Naive thymus-derived CD4-positive, alpha-beta T cell (primary cell): ENCODE measurements at regions of chr4 and their contacts with region 1.

Region 1: DNA sequence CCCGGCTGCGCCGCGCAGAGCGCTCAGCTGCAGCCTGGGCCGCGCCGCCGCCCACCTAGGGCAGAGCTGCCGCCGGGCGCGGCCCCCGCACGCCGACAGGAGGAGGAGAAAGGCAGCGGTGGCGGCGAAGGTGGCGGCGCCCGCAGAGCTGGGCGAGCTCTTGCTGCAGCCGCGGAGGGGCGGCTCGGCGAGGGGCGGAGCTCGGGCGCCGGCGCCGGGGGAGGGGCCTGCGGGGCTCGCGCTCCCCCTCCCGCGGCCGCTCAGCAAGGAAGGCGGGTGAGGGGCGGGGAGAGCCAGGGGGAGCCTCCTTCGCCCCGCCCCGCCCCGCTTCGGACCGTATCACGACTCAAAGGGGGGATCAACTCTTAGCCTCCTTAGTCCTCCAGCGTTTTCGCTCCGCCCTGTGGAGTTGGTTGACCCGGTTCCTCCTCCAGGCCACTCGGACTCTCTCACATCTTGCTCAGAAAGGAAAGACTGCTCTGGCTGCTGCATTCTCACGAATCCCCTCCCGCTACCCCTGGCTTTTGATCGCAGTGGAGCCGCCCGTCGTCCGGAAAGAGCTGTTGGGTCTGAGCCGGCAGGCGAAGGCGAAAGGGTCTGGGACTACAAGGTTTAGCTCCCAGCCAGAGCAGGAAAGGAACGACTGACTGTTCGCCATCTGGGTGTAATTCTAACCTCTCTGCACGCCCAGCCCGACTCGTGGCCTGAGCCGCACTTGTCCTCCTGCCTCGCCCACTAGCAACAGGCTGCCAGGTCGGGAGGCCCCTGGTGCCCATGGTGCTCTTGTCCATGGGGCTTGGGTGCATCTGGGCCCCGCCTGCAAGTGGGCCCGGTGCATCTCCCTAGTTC is at the start of gene ATP8A1:
- DNase-seq: peak; percentile 85 to 96 (median 93)
- ATAC-seq: peak; percentile 97
- H3K4me3 ChIP-seq: peak within 1 kb of the TSS; percentile 96
- H3K4me3 Mint-ChIP-seq: peak within 1 kb of the TSS; percentile 92 to 98 (median 98)
- H3K27ac ChIP-seq: peak within 1 kb of the TSS; percentile 83
- H3K27ac Mint-ChIP-seq: peak within 1 kb of the TSS; percentile 95 to 99 (median 98)
- H3K4me1 ChIP-seq: peaks cover 18 to 21% of the 10 kb centered on the region in 2 donors
- H3K4me1 Mint-ChIP-seq: peaks cover 38 to 64% (median 51%) of the 10 kb centered on the region in 7 donors
- H3K27me3 ChIP-seq: no peaks in the 10 kb centered on the region
- H3K27me3 Mint-ChIP-seq: peaks cover 0 to 6% (median 0%) of the 10 kb centered on the region in 5 donors
- total RNA-seq, gene ATP8A1: 28.9 to 66.8 (median 54.4) TPM

Region 2: DNA sequence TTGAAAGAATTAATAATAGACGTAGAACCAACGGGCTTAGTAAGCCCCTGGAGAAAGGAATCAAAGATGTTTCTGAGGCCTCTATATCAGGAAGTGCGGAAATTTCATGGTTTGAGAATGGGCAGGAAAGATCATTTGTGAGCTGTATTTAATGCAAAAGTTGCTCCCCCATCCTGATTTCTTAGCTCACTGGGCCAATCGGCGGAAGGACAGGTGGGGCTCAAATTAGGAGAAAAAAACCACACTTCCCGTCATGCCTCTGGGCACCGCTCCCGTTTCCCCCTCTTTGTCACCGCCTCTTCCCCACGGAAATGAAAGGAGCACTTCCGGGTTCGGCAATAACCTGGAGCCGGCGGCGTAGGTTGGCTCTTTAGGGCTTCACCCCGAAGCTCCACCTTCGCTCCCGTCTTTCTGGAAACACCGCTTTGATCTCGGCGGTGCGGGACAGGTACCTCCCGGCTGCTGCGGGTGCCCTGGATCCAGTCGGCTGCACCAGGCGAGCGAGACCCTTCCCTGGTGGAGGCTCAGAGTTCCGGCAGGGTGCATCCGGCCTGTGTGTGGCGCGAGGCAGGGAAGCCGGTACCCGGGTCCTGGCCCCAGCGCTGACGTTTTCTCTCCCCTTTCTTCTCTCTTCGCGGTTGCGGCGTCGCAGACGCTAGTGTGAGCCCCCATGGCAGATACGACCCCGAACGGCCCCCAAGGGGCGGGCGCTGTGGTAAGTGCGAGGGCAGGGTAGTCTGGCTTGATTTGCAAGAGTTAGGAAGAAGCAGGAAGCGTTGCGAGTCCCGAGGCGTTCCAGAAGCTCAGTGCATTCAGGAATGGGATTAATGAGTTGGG is 722.1 kb before region 1 on chr4 and contains the start of gene TMEM33:
- CTCF ChIA-PET with region 1: no interaction called
- POLR2A ChIA-PET with region 1: no interaction called
- intact Hi-C with region 1: loop called in 1 of 2 experiments (anchors 5 kb)
- DNase-seq: peak; percentile 48 to 81 (median 75)
- ATAC-seq: peak; percentile 89
- H3K4me3 ChIP-seq: peak within 1 kb of the TSS; percentile 84
- H3K4me3 Mint-ChIP-seq: peak within 1 kb of the TSS; percentile 93 to 99 (median 96)
- H3K27ac ChIP-seq: peak within 1 kb of the TSS; percentile 80
- H3K27ac Mint-ChIP-seq: peak within 1 kb of the TSS; percentile 71 to 97 (median 89)
- H3K4me1 ChIP-seq: peaks cover 15 to 20% of the 10 kb centered on the region in 2 donors
- H3K4me1 Mint-ChIP-seq: peaks cover 39 to 59% (median 51%) of the 10 kb centered on the region in 7 donors
- H3K27me3 ChIP-seq: no peaks in the 10 kb centered on the region
- H3K27me3 Mint-ChIP-seq: no peaks in the 10 kb centered on the region
- total RNA-seq, gene TMEM33: 24.2 to 61.9 (median 39.6) TPM

Region 3: DNA sequence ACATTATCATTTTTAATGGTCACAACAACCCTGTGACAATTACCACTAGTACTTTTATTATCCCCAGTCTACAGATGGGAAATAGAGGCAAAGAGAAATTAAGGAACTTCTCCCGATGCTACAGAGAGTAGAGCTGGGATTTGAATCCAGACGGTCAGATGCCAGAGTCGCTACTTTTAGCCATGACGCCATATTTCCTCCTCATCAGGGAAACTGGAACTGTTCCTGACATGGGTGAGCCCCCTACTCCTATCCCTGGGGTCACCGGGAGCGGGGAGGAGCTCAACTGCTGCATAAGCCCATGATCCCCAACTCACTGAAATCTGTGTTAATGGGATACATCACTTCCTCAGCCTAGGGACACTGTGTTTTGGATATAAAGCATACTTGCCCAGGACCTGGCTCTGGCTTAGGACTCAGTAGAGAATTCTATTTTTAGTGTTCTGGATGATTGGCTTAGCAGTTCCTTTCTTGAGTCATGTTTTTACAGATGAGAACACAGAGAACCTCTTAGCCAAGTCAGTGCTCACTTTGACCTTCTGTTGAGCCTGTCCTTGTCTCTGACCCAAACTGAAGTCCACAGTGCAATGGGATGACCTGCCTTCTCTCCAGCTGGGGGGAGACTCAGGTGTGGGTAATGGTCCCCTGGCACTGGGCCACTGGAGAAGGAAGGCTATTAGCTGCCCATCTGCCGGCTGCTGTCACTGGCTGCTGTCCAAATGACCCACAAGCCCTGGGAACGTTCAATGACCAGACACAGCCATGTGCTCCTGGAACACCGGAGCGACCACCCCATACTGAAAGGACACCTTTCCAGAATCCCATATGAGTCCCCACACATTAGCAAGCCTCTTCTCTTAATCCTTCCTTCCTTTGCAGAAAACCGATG is 350.7 kb before region 1 on chr4:
- CTCF ChIA-PET with region 1: no interaction called
- POLR2A ChIA-PET with region 1: no interaction called
- intact Hi-C with region 1: no loop called
- DNase-seq: no peak
- ATAC-seq: no peak
- H3K4me3 ChIP-seq: no peak overlapping the region
- H3K4me3 Mint-ChIP-seq: no peak overlapping the region
- H3K27ac ChIP-seq: no peak overlapping the region
- H3K27ac Mint-ChIP-seq: peak overlapping the region in 1 of 9 donors; percentile 26
- H3K4me1 ChIP-seq: no peaks in the 10 kb centered on the region
- H3K4me1 Mint-ChIP-seq: no peaks in the 10 kb centered on the region
- H3K27me3 ChIP-seq: no peaks in the 10 kb centered on the region
- H3K27me3 Mint-ChIP-seq: peaks cover 0 to 41% (median 24%) of the 10 kb centered on the region in 5 donors

Region 4: GRCh38 chr4:42568610-42569207 is 88.5 kb before region 1 on chr4:
- CTCF ChIA-PET with region 1: interaction called, 3 read pairs
- POLR2A ChIA-PET with region 1: interaction called, 7 read pairs
- intact Hi-C with region 1: loop called (anchors 1 kb)
- DNase-seq: peak in 8 of 9 donors; percentile 31 to 69 (median 62)
- ATAC-seq: peak; percentile 91
- H3K4me3 ChIP-seq: no peak overlapping the region
- H3K4me3 Mint-ChIP-seq: no peak overlapping the region
- H3K27ac ChIP-seq: no peak overlapping the region
- H3K27ac Mint-ChIP-seq: peak overlapping the region in 4 of 9 donors; percentile 11 to 84 (median 57)
- H3K4me1 ChIP-seq: no peaks in the 10 kb centered on the region
- H3K4me1 Mint-ChIP-seq: peaks cover 0 to 4% (median 0%) of the 10 kb centered on the region in 7 donors
- H3K27me3 ChIP-seq: no peaks in the 10 kb centered on the region
- H3K27me3 Mint-ChIP-seq: no peaks in the 10 kb centered on the region

Region 5: DNA sequence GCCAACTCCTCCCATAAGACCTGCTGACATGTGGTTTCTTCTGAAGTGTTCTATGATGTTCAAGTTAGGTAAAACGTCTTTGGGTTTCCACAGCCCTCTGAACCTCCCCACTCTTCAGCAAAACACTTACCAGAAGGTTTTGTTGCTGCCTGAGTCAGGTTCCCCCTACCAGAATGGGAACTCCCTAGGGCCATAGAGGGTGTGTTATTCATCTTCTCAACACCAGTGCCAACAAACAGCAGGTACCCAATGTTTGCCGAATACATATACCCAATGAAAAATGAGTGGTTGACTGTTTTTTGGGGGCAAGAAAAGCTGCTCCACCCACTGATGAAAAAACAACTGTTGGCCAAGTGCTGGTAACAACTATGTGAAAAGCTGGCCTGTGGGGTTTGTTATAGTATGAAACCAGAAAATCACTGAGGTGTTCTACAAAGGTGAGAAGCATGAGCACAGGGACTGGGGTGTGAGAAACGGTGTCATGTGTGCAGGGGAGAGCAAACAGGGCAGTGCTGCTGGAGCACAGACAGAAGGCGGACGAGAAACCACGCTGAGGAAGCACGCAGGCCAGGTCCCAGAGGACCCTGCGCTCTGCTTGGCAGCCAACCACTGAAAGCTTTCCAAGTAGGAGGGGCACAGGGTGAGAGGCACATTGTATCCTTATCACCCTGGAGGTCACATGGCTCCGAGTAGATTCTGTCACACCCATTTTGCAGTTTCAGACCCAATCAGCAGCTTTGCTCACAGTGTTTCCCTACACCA is 29.1 kb before region 1 on chr4:
- CTCF ChIA-PET with region 1: interaction called, 4 read pairs
- POLR2A ChIA-PET with region 1: interaction called, 19 read pairs
- intact Hi-C with region 1: loop called (anchors 1 kb)
- DNase-seq: peak in 8 of 9 donors; percentile 10 to 91 (median 78)
- ATAC-seq: peak; percentile 92
- H3K4me3 ChIP-seq: peak overlapping the region; percentile 31
- H3K4me3 Mint-ChIP-seq: peak overlapping the region; percentile 53 to 89 (median 80)
- H3K27ac ChIP-seq: peak overlapping the region; percentile 70
- H3K27ac Mint-ChIP-seq: peak overlapping the region; percentile 86 to 99 (median 96)
- H3K4me1 ChIP-seq: peaks cover 31 to 40% of the 10 kb centered on the region in 2 donors
- H3K4me1 Mint-ChIP-seq: peaks cover 35 to 77% (median 74%) of the 10 kb centered on the region in 7 donors
- H3K27me3 ChIP-seq: no peaks in the 10 kb centered on the region
- H3K27me3 Mint-ChIP-seq: no peaks in the 10 kb centered on the region

Region 6: GRCh38 chr4:42643685-42644084 is 13.5 kb before region 1 on chr4:
- CTCF ChIA-PET with region 1: no interaction called
- POLR2A ChIA-PET with region 1: interaction called, 15 read pairs
- intact Hi-C with region 1: loop called in 1 of 2 experiments (anchors 1 kb)
- DNase-seq: no peak
- ATAC-seq: peak; percentile 46
- H3K4me3 ChIP-seq: no peak overlapping the region
- H3K4me3 Mint-ChIP-seq: peak overlapping the region in 2 of 10 donors; percentile 12 to 48
- H3K27ac ChIP-seq: no peak overlapping the region
- H3K27ac Mint-ChIP-seq: peak overlapping the region in 1 of 9 donors; percentile 34
- H3K4me1 ChIP-seq: peaks cover 44 to 49% of the 10 kb centered on the region in 2 donors
- H3K4me1 Mint-ChIP-seq: peaks cover 50 to 95% (median 84%) of the 10 kb centered on the region in 7 donors
- H3K27me3 ChIP-seq: no peaks in the 10 kb centered on the region
- H3K27me3 Mint-ChIP-seq: no peaks in the 10 kb centered on the region

Region 7: GRCh38 chr4:42678512-42678911 is 21.3 kb after region 1 on chr4:
- CTCF ChIA-PET with region 1: interaction called, 3 read pairs
- POLR2A ChIA-PET with region 1: interaction called, 18 read pairs
- intact Hi-C with region 1: loop called in 1 of 2 experiments (anchors 1 kb)
- DNase-seq: peak in 2 of 9 donors; percentile 12 to 31
- ATAC-seq: no peak
- H3K4me3 ChIP-seq: no peak overlapping the region
- H3K4me3 Mint-ChIP-seq: peak overlapping the region in 2 of 10 donors; percentile 53 to 61
- H3K27ac ChIP-seq: no peak overlapping the region
- H3K27ac Mint-ChIP-seq: peak overlapping the region in 1 of 9 donors; percentile 74
- H3K4me1 ChIP-seq: peaks cover 0 to 14% of the 10 kb centered on the region in 2 donors
- H3K4me1 Mint-ChIP-seq: peaks cover 4 to 60% (median 28%) of the 10 kb centered on the region in 7 donors
- H3K27me3 ChIP-seq: no peaks in the 10 kb centered on the region
- H3K27me3 Mint-ChIP-seq: no peaks in the 10 kb centered on the region

Region 8: DNA sequence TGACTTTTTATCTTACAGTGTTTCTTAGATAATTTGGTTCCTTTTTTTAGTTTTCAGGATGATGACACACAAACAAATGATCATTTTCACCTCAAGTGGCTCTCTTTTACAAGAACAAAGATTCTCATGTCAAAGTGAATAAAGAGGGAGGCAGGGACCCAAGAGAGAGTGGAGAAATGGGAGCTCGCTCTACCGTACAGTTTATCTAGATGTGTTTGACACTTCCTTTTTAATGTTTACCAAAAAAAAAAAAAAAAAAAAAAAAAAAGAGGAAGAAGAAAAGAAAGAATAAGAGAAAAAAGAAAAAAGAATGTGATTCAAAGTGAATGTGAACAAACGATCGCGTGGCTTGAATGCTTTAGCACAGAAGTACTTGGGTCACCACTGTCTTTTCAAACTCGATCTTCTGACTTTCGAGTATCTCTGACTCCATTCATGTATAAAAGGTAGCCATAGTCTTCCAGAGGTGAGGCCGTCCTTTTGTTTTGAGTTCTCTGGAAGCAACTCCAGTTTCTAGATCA is 159.8 kb after region 1 on chr4:
- CTCF ChIA-PET with region 1: no interaction called
- POLR2A ChIA-PET with region 1: no interaction called
- intact Hi-C with region 1: loop called in 1 of 2 experiments (anchors 1 kb)
- DNase-seq: no peak
- ATAC-seq: no peak
- H3K4me3 ChIP-seq: no peak overlapping the region
- H3K4me3 Mint-ChIP-seq: no peak overlapping the region
- H3K27ac ChIP-seq: no peak overlapping the region
- H3K27ac Mint-ChIP-seq: no peak overlapping the region
- H3K4me1 ChIP-seq: no peaks in the 10 kb centered on the region
- H3K4me1 Mint-ChIP-seq: no peaks in the 10 kb centered on the region
- H3K27me3 ChIP-seq: no peaks in the 10 kb centered on the region
- H3K27me3 Mint-ChIP-seq: peaks cover 0 to 5% (median 0%) of the 10 kb centered on the region in 5 donors